Lower leg skin (tissue), 4 donors: ENCODE measurements at regions of chr6 and their contacts with region 1.

Region 1: GRCh38 chr6:12228447-12229146 is 61.6 kb upstream of the EDN1 start:
- DNase-seq: no peak
- H3K4me3 ChIP-seq: no peak overlapping the region
- CTCF ChIP-seq: no peak
- POLR2A ChIP-seq: no peak

Region 2: GRCh38 chr6:12150812-12151432 is 77.7 kb before region 1 on chr6:
- intact Hi-C with region 1: loop called (anchors 10 kb)
- DNase-seq: no peak
- H3K4me3 ChIP-seq: no peak overlapping the region
- CTCF ChIP-seq: no peak
- POLR2A ChIP-seq: no peak